Activated naive CD4-positive, alpha-beta T cell treated with anti-CD3 and anti-CD28 coated beads for 36 hours (primary cell): ENCODE measurements at regions of chr4 and their contacts with region 1.

Region 1: GRCh38 chr4:146465628-146466027 is 56.1 kb downstream of the SLC10A7 start:
- DNase-seq: no peak
- H3K4me3 Mint-ChIP-seq: no peak overlapping the region
- H3K27ac Mint-ChIP-seq: no peak overlapping the region
- H3K4me1 Mint-ChIP-seq: peaks cover 21% of the 10 kb centered on the region
- H3K27me3 Mint-ChIP-seq: no peaks in the 10 kb centered on the region

Region 2: DNA sequence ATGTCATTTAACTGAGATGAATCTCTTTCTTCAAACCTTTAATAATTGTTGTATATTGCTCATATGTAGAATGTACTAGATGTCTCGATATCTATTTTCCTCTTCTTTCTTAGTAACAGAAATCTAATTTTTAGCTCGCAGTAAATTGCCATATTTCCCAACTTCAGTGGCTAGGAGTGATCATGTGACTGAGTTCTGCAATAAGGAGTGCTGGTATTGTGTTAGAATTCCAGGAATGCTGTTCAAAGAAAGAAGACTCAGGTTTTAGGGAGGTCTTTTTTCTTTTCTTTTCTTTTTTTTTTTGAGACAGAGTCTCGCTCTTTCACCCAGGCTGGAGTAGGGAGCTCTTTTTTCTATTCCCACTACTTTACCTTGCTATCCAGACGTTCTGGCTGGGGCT is 25.6 kb before region 1 on chr4:
- CTCF ChIA-PET with region 1: no interaction called
- intact Hi-C with region 1: loop called (anchors 2 kb)
- DNase-seq: no peak
- H3K4me3 Mint-ChIP-seq: no peak overlapping the region
- H3K27ac Mint-ChIP-seq: no peak overlapping the region
- H3K4me1 Mint-ChIP-seq: peaks cover 9% of the 10 kb centered on the region
- H3K27me3 Mint-ChIP-seq: no peaks in the 10 kb centered on the region

Region 3: DNA sequence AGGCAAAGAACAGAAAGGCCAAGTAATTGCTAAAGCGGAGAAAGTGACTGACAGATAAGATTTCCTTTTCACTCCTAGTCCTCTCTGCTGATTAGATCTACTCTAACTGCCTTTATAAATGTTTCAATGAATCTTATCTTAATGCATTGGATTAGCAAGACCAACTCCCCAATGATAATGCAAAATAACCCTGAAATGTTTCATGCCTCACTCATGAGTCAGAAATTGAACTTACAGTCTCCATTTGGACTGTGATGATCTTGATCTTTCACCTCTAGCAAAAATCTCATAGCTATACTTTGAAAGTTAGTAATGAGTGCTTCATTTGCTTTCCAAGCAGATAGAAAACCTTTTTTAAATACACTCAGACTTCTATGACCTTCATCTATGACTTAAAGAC is 29.6 kb after region 1 on chr4:
- CTCF ChIA-PET with region 1: no interaction called
- intact Hi-C with region 1: no loop called
- DNase-seq: no peak
- H3K4me3 Mint-ChIP-seq: no peak overlapping the region
- H3K27ac Mint-ChIP-seq: no peak overlapping the region
- H3K4me1 Mint-ChIP-seq: peaks cover 17% of the 10 kb centered on the region
- H3K27me3 Mint-ChIP-seq: no peaks in the 10 kb centered on the region